T-cell (primary cell): ENCODE measurements at regions of chr20 and their contacts with region 1.

Region 1: DNA sequence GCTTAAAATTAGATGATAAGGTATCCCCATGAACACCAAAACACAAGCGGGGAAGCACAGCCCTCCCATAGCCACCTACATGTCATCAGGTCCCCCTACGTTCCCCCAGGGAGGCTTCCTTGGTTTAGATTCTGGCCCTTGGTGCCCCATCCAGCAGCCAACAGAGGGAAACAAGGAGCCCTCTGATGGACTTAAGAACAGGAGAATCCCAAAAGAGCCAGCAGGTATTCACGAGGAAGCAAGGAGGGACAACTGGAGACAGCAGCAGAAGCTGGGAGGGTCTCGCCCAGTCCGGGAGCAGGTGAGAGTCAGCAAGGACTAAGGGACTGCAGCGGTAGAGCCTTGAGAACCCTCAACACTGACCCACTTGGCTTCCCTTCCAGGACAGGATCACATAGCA is 58.4 kb upstream of the TOP1 start:
- DNase-seq: no peak
- ATAC-seq: no peak
- H3K4me3 ChIP-seq: no peak overlapping the region
- H3K4me3 Mint-ChIP-seq: no peak overlapping the region
- H3K27ac ChIP-seq: no peak overlapping the region
- H3K27ac Mint-ChIP-seq: no peak overlapping the region
- H3K4me1 ChIP-seq: peaks cover 0 to 9% of the 10 kb centered on the region in 2 experiments
- H3K4me1 Mint-ChIP-seq: peaks cover 8 to 10% (median 9%) of the 10 kb centered on the region in 3 donors
- H3K27me3 ChIP-seq: peaks cover 2 to 14% of the 10 kb centered on the region in 2 experiments
- H3K27me3 Mint-ChIP-seq: peaks cover 1 to 8% of the 10 kb centered on the region in 2 donors

Region 2: DNA sequence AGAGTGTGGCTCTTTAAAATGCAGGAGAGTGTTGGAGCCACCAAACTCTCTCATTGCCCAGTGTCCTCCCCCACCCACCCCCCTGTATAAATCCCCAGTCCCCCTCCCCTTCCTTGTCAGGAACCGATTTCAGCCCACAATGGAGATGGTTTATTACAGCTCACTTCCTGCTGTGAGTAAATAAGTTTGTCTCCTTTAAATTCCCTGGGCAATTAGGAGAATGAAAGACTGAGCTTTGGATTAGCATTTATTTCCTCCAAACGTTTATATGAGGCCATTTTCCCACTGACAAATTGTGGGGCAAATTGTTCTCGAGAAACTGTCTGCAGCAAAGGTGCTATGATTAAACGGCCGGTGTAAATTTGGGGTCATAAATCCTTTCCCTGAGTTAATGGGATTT is 1879.3 kb before region 1 on chr20:
- CTCF ChIA-PET with region 1: no interaction called
- POLR2A ChIA-PET with region 1: interaction called in 1 of 2 experiments, 11 read pairs
- DNase-seq: no peak
- ATAC-seq: no peak
- H3K4me3 ChIP-seq: no peak overlapping the region
- H3K4me3 Mint-ChIP-seq: no peak overlapping the region
- H3K27ac ChIP-seq: no peak overlapping the region
- H3K27ac Mint-ChIP-seq: no peak overlapping the region
- H3K4me1 ChIP-seq: no peaks in the 10 kb centered on the region
- H3K4me1 Mint-ChIP-seq: peaks cover 0 to 2% (median 0%) of the 10 kb centered on the region in 3 donors
- H3K27me3 ChIP-seq: peaks cover 0 to 14% of the 10 kb centered on the region in 2 experiments
- H3K27me3 Mint-ChIP-seq: peaks cover 10 to 18% of the 10 kb centered on the region in 2 donors

Region 3: DNA sequence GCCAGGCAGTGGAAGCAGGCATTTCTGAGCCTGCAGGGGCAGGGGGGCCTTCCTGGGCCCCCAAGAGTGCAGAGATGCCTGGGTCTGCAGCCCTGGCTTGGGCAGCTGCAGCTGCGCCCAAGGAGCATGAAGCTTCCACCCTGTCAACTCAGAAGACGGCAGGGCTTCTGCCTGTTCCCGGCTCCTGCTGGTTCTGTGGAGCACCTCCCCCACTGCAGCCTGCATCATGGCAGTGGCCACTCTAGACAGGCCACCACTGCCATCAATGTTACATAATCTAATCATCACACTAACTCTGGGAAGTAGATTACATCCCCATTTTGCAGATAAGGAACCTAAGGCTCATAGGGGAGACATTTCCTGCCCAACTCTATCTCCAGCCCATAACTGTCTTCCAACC is 37.3 kb after region 1 on chr20:
- CTCF ChIA-PET with region 1: interaction called in 1 of 2 experiments, 7 read pairs
- POLR2A ChIA-PET with region 1: interaction called in 1 of 2 experiments, 15 read pairs
- DNase-seq: no peak
- ATAC-seq: no peak
- H3K4me3 ChIP-seq: no peak overlapping the region
- H3K4me3 Mint-ChIP-seq: no peak overlapping the region
- H3K27ac ChIP-seq: no peak overlapping the region
- H3K27ac Mint-ChIP-seq: peak overlapping the region in 1 of 2 donors; percentile 13
- H3K4me1 ChIP-seq: peaks cover 0 to 41% of the 10 kb centered on the region in 2 experiments
- H3K4me1 Mint-ChIP-seq: peaks cover 26 to 47% (median 30%) of the 10 kb centered on the region in 3 donors
- H3K27me3 ChIP-seq: no peaks in the 10 kb centered on the region
- H3K27me3 Mint-ChIP-seq: no peaks in the 10 kb centered on the region

Region 4: GRCh38 chr20:41095110-41095969 is 125.1 kb after region 1 on chr20:
- CTCF ChIA-PET with region 1: interaction called, 6 to 31 read pairs
- POLR2A ChIA-PET with region 1: no interaction called
- DNase-seq: peak; percentile 8 to 81 (median 48)
- ATAC-seq: peak; percentile 60 to 70 (median 65)
- H3K4me3 ChIP-seq: no peak overlapping the region
- H3K4me3 Mint-ChIP-seq: no peak overlapping the region
- H3K27ac ChIP-seq: no peak overlapping the region
- H3K27ac Mint-ChIP-seq: peak overlapping the region in 1 of 2 donors; percentile 55
- H3K4me1 ChIP-seq: no peaks in the 10 kb centered on the region
- H3K4me1 Mint-ChIP-seq: peaks cover 0 to 5% (median 0%) of the 10 kb centered on the region in 3 donors
- H3K27me3 ChIP-seq: no peaks in the 10 kb centered on the region
- H3K27me3 Mint-ChIP-seq: no peaks in the 10 kb centered on the region